ENCODE measurements at regions of chr22 and their contacts with region 1.

Region 1: GRCh38 chr22:44494497-44494896 is 3.5 kb downstream of the RTL6 start:
- DNase-seq: no peak
- ATAC-seq: no peak
- H3K4me3 ChIP-seq: no peak overlapping the region
- H3K27ac ChIP-seq: no peak overlapping the region
- H3K4me1 ChIP-seq: no peaks in the 10 kb centered on the region
- H3K27me3 ChIP-seq: no peaks in the 10 kb centered on the region
- CTCF ChIP-seq: no peak

Region 2: DNA sequence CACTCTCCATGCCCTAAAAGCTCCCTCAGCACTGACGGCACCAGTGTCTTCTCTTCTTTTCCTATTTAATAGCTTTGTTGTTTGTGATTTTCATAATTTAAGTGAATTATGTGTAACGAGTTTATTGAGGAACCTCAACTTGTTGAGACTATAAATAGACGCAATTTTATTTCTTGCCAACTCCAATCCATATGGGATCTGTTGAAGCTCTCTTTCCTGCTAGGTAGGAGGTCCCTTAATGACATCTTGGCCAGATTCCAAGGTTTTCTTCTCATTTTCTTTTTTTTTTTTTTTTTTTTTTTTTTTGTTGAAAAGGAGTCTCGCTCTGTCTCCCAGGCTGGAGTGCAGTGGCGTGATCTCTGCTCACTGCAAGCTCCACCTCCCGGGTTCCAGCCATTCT is 10.6 kb before region 1 on chr22:
- CTCF ChIA-PET with region 1: no interaction called
- POLR2A ChIA-PET with region 1: interaction called, 13 read pairs
- in situ Hi-C with region 1: no loop called
- intact Hi-C with region 1: no loop called
- DNase-seq: no peak
- ATAC-seq: no peak
- H3K4me3 ChIP-seq: no peak overlapping the region
- H3K27ac ChIP-seq: no peak overlapping the region
- H3K4me1 ChIP-seq: no peaks in the 10 kb centered on the region
- H3K27me3 ChIP-seq: no peaks in the 10 kb centered on the region
- CTCF ChIP-seq: no peak

Region 3: GRCh38 chr22:44505796-44506354 is 11.4 kb after region 1 on chr22:
- CTCF ChIA-PET with region 1: no interaction called
- POLR2A ChIA-PET with region 1: no interaction called
- in situ Hi-C with region 1: no loop called
- intact Hi-C with region 1: no loop called
- DNase-seq: no peak
- ATAC-seq: no peak
- H3K4me3 ChIP-seq: no peak overlapping the region
- H3K27ac ChIP-seq: no peak overlapping the region
- H3K4me1 ChIP-seq: no peaks in the 10 kb centered on the region
- H3K27me3 ChIP-seq: no peaks in the 10 kb centered on the region
- CTCF ChIP-seq: no peak